ENCODE measurements at regions of chrX and their contacts with region 1.

Region 1: GRCh38 chrX:133670383-133670782 is 255.1 kb upstream of the GPC4 start:
- DNase-seq: peak in 1 of 2 donors; percentile 5
- ATAC-seq: peak in 2 of 8 donors; percentile 33 to 43
- H3K4me3 ChIP-seq: no peak overlapping the region
- H3K27ac ChIP-seq: no peak overlapping the region
- H3K4me1 ChIP-seq: no peaks in the 10 kb centered on the region
- H3K27me3 ChIP-seq: peaks cover 0 to 37% (median 0%) of the 10 kb centered on the region in 7 donors
- CTCF ChIP-seq: peak; percentile 30 to 75 (median 69)

Region 2: DNA sequence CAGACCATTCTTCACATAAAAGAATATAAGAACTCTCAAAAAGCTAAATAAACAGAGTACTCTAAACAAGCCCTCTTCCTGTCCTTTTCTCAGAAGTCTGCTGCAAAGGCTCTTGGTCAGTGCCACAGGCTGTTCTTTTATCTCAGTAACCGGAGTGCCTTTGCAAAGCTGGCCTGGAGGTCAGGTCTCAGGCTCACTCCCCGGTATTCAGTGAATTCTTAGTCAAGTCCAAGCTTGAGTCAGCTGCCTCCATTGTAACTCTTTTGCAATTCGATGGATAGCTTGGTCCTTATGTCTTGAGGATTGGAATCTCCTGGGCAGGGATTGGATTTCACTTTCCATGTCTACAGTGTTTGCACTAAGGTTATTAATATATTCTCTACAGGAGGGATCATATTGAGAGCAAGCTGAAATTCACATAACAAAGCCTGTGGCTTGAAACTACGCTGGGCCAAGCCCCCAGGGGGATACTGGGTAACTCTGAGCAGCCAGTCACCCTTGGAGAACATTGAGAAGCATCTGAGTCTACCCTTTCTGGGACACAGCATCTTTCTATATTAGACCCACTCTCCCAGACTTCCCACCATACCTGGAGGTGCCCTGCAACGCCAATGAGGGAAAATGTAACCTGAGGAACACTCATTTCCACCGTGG is 702.0 kb before region 1 on chrX:
- intact Hi-C with region 1: loop called in 6 of 10 experiments (anchors 10 kb)
- DNase-seq: no peak
- ATAC-seq: no peak
- H3K4me3 ChIP-seq: no peak overlapping the region
- H3K27ac ChIP-seq: no peak overlapping the region
- H3K4me1 ChIP-seq: no peaks in the 10 kb centered on the region
- H3K27me3 ChIP-seq: peaks cover 0 to 78% (median 0%) of the 10 kb centered on the region in 7 donors
- CTCF ChIP-seq: no peak

Region 3: DNA sequence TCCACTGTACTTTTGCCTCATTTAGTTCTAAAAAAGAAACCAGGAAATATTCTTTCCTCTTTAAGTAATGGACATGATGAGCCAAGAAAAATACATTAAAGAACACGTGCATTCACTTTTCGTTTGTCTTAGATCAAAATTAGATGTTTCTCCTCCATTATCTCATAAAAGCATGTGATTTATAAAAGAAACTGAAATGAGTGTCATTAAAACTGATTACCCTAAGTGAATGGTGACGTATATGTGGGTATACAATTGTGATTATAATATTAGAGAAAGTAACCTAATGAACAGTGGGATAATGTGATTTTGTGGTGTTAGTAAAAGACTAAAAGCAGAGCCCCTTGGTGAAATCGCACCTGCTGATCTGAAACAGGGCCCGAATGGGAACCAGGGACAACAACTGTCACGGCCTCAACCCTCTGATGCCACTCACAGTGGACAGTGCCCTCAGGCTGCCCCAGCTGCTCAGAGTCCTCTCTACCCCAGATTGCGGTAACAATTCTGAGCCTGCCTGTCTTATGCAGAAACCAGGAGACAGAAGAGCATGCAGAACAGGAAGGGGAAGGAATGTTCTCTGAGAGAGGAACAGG is 686.2 kb before region 1 on chrX:
- intact Hi-C with region 1: loop called in 8 of 10 experiments (anchors 5 to 10 kb)
- DNase-seq: no peak
- ATAC-seq: no peak
- H3K4me3 ChIP-seq: no peak overlapping the region
- H3K27ac ChIP-seq: no peak overlapping the region
- H3K4me1 ChIP-seq: no peaks in the 10 kb centered on the region
- H3K27me3 ChIP-seq: peaks cover 0 to 24% (median 0%) of the 10 kb centered on the region in 7 donors
- CTCF ChIP-seq: no peak

Region 4: GRCh38 chrX:133005066-133005465 is 665.3 kb before region 1 on chrX:
- intact Hi-C with region 1: loop called in 1 of 10 experiments (anchors 10 kb)
- DNase-seq: no peak
- ATAC-seq: no peak
- H3K4me3 ChIP-seq: no peak overlapping the region
- H3K27ac ChIP-seq: no peak overlapping the region
- H3K4me1 ChIP-seq: no peaks in the 10 kb centered on the region
- H3K27me3 ChIP-seq: peaks cover 0 to 16% (median 0%) of the 10 kb centered on the region in 7 donors
- CTCF ChIP-seq: peak in 8 of 9 donors; percentile 9 to 58 (median 48)

Region 5: GRCh38 chrX:133335027-133335426 is 335.4 kb before region 1 on chrX:
- intact Hi-C with region 1: loop called in 9 of 10 experiments (anchors 2 to 10 kb)
- DNase-seq: peak in 1 of 2 donors; percentile 3
- ATAC-seq: no peak
- H3K4me3 ChIP-seq: no peak overlapping the region
- H3K27ac ChIP-seq: no peak overlapping the region
- H3K4me1 ChIP-seq: no peaks in the 10 kb centered on the region
- H3K27me3 ChIP-seq: peaks cover 0 to 35% (median 0%) of the 10 kb centered on the region in 7 donors
- CTCF ChIP-seq: peak in 8 of 9 donors; percentile 24 to 61 (median 48)

Region 6: DNA sequence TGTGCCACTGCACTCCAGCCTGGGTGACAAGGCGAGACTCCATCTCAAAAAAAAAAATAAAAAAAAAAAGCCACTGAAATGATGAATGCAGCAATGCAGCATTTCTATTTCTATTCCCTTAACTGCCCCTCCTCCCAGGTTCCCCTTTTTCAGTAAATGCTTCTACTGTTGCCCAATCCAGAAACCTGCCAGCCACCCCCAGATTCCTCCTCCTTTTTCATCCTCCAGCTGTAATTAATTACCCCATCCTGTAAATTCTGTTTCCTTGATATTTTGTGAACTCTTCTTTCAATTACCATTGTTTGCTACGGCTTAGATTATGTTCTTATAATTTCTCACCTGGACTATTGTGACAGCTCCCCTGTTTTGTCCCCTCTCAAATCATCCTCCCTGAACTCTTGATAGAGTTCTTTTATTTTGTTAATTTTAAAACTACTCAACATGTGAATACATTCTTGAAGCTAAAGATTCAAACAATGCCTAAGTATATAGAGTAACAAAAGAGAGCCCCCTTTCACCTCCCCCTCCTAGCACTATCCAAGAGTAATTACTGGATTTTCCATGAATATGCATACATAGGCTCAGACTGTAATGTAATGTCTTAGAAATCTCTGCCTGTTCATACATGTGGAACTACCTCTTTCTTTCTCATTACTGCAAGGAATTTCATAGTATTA is 114.5 kb before region 1 on chrX:
- intact Hi-C with region 1: no loop called
- DNase-seq: no peak
- ATAC-seq: no peak
- H3K4me3 ChIP-seq: no peak overlapping the region
- H3K27ac ChIP-seq: no peak overlapping the region
- H3K4me1 ChIP-seq: peaks cover 0 to 10% (median 0%) of the 10 kb centered on the region in 9 donors
- H3K27me3 ChIP-seq: peaks cover 0 to 23% (median 0%) of the 10 kb centered on the region in 7 donors
- CTCF ChIP-seq: no peak

Region 7: DNA sequence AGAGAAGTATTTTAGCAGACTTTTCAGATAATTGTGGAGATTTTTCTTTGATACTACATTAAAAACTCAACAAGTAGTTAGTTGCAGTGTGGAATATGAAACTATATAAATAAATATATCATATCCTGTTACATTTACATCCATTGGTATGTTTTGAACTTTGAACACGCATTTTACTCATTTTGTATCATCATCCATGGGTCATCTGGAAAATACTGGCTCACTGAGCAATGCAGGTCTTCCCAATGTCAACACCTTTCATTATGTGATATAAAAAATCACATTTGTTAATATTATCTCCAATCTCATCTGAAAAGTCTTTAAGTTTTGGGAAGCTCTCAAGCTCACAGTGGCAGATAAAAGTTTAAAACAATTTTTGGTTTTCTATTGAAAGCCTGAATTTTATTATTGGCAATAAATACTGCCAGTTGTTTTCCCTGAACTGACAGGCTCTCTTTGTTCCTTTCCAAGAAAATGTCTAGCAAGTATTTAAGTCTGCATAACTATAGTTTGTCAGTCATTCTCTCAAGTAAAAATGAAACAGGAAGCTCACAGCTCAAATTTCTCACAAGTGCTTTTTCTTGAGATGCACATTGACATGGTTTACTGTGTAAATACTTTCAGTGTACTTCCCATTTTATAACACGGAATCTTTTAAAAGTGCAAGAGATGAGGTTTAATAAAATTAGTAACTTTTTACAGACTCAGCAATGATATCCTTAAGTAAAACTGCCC is 71.6 kb before region 1 on chrX:
- intact Hi-C with region 1: no loop called
- DNase-seq: no peak
- ATAC-seq: no peak
- H3K4me3 ChIP-seq: no peak overlapping the region
- H3K27ac ChIP-seq: no peak overlapping the region
- H3K4me1 ChIP-seq: no peaks in the 10 kb centered on the region
- H3K27me3 ChIP-seq: peaks cover 0 to 23% (median 0%) of the 10 kb centered on the region in 7 donors
- CTCF ChIP-seq: no peak

Measured in heart right ventricle (tissue), 16 donors.